ENCODE measurements at regions of chr16 and their contacts with region 1.

Region 1: DNA sequence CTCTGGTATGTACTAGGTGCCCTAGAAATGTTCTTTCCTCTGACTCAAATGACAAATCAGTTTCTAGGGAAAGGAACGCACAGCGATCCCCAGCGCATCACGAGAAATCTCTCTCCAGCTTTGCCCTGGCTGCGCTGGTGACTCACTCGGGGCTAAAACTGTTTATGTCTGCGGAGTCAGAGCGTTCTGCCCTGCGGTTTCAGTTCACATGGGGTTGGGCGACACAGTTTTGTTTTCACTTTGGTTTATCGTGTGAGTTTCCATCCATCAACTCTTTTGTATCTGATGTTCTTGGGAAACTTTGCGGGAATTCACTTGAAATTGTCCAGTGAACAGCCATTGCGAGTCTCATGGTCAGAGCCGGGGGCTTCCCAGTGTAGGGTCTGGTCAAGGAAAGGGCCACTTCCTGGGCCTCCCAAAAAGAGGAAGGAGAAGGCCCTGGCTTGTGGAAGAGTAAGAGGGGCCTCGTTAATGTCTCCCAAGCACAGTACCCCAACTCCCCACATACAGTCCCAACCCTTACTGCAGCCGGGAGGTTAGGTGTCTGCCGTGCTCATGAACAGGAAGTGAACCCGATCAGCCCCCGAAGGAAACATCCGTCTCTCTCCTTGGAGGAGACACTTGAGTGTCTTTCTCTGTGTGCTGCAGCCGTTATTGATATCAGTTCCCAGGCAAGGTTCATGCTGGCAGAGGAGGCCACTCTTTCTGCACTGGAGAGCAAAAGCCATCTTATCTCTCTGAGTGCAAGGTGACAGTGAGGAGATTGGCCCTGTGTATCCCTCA is 643.2 kb downstream of the WWOX start:
- DNase-seq: peak; percentile 47 to 90 (median 77)
- ATAC-seq: peak; percentile 93
- H3K4me3 ChIP-seq: peak overlapping the region; percentile 6 to 34
- H3K4me3 Mint-ChIP-seq: peak overlapping the region; percentile 78
- H3K27ac ChIP-seq: peak overlapping the region; percentile 66 to 90
- H3K27ac Mint-ChIP-seq: peak overlapping the region; percentile 97
- H3K4me1 ChIP-seq: peaks cover 20% of the 10 kb centered on the region
- H3K4me1 Mint-ChIP-seq: peaks cover 32% of the 10 kb centered on the region
- H3K27me3 ChIP-seq: no peaks in the 10 kb centered on the region
- H3K27me3 Mint-ChIP-seq: no peaks in the 10 kb centered on the region
- CTCF ChIP-seq: no peak

Region 2: DNA sequence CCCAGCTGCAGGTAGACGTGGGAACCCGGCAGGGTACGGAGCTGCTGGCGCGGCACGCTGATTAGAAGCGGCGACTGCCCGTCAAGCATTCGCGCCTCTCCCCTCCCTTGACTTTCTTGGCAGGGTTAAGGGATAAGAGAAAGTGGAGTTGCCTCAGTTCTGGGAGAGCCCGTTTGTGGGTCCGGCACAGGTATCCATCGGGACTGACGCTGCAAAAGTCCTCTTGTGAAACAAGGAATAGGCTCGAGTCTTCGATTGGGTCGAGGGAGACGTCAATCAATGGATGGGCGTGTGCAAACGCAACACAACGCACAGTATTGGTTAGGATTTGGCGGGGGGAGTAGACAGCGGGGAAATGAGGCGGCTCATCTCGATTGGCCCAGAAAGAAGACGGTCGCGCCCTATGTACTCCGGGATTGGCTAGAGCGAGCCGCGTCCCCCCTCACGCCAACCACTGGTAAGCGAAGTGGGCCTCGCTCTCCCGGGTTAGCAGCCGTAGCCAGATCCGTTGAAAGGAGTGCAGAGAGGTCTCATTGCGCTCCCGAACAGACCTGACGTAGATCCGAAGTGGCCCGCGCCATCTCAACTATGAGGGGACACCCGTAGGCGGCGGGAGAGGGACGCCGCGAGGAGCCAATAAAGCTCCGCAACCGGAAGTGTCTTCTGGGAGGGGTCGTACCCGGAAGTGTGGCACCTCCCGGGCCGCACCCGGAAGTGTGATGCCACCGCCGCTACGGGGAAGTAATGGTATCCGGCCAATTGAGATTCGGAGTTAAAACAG is 1552.0 kb before region 1 on chr16 and contains the start of gene MON1B:
- CTCF ChIA-PET with region 1: no interaction called
- POLR2A ChIA-PET with region 1: no interaction called
- intact Hi-C with region 1: loop called in 1 of 2 experiments (anchors 5 kb)
- DNase-seq: peak; percentile 88 to 99 (median 95)
- ATAC-seq: peak; percentile 93
- H3K4me3 ChIP-seq: peak within 1 kb of the TSS; percentile 70 to 81
- H3K4me3 Mint-ChIP-seq: peak within 1 kb of the TSS; percentile 100
- H3K27ac ChIP-seq: peak within 1 kb of the TSS; percentile 98
- H3K27ac Mint-ChIP-seq: peak within 1 kb of the TSS; percentile 100
- H3K4me1 ChIP-seq: peaks cover 26% of the 10 kb centered on the region
- H3K4me1 Mint-ChIP-seq: peaks cover 52% of the 10 kb centered on the region
- H3K27me3 ChIP-seq: no peaks in the 10 kb centered on the region
- H3K27me3 Mint-ChIP-seq: peaks cover 6% of the 10 kb centered on the region
- CTCF ChIP-seq: no peak
- total RNA-seq, gene MON1B: 49.1 to 50.7 TPM

Measured in CD8-positive, alpha-beta T cell (primary cell).